Activated T-helper 1 cell treated with anti-CD3 and anti-CD28 coated beads, Interleukin-12 subunit alpha, Interleukin-12 subunit beta, Interleukin-2, Interleukin-4 antibody, amounts not matched to agents 30 ng/mL and 10 ng/mL and 1 ng/mL, durations not matched to agents 14 hours and 24 hours and 36 hours (primary cell): ENCODE measurements at regions of chr16 and their contacts with region 1.

Region 1: GRCh38 chr16:47460711-47461597 is at the starts of genes ITFG1 and PHKB:
- DNase-seq: peak; percentile 95
- H3K4me3 Mint-ChIP-seq: peak within 1 kb of the TSS; percentile 90
- H3K27ac Mint-ChIP-seq: peak within 1 kb of the TSS; percentile 97
- H3K4me1 Mint-ChIP-seq: peaks cover 51% of the 10 kb centered on the region
- H3K27me3 Mint-ChIP-seq: no peaks in the 10 kb centered on the region
- total RNA-seq, gene ITFG1: 25.4 and 27.6 TPM in 2 replicates
- total RNA-seq, gene PHKB: 24.4 and 26.6 TPM in 2 replicates

Region 2: GRCh38 chr16:46789499-46790414 is 671.2 kb before region 1 on chr16:
- intact Hi-C with region 1: loop called (anchors 10 kb)
- DNase-seq: peak; percentile 79
- H3K4me3 Mint-ChIP-seq: peak overlapping the region; percentile 61
- H3K27ac Mint-ChIP-seq: peak overlapping the region; percentile 59
- H3K4me1 Mint-ChIP-seq: peaks cover 22% of the 10 kb centered on the region
- H3K27me3 Mint-ChIP-seq: peaks cover 4% of the 10 kb centered on the region

Region 3: GRCh38 chr16:47037746-47038458 is 423.1 kb before region 1 on chr16:
- intact Hi-C with region 1: loop called (anchors 2 kb)
- DNase-seq: peak; percentile 85
- H3K4me3 Mint-ChIP-seq: peak overlapping the region; percentile 81
- H3K27ac Mint-ChIP-seq: no peak overlapping the region
- H3K4me1 Mint-ChIP-seq: peaks cover 4% of the 10 kb centered on the region
- H3K27me3 Mint-ChIP-seq: peaks cover 14% of the 10 kb centered on the region

Region 4: GRCh38 chr16:47387026-47387734 is 73.8 kb before region 1 on chr16:
- intact Hi-C with region 1: no loop called
- DNase-seq: no peak
- H3K4me3 Mint-ChIP-seq: no peak overlapping the region
- H3K27ac Mint-ChIP-seq: no peak overlapping the region
- H3K4me1 Mint-ChIP-seq: peaks cover 6% of the 10 kb centered on the region
- H3K27me3 Mint-ChIP-seq: no peaks in the 10 kb centered on the region

Region 5: GRCh38 chr16:47523342-47524006 is 62.5 kb after region 1 on chr16:
- intact Hi-C with region 1: no loop called
- DNase-seq: no peak
- H3K4me3 Mint-ChIP-seq: no peak overlapping the region
- H3K27ac Mint-ChIP-seq: no peak overlapping the region
- H3K4me1 Mint-ChIP-seq: peaks cover 13% of the 10 kb centered on the region
- H3K27me3 Mint-ChIP-seq: no peaks in the 10 kb centered on the region

Region 6: GRCh38 chr16:47732523-47733111 is 271.7 kb after region 1 on chr16:
- intact Hi-C with region 1: loop called (anchors 5 kb)
- DNase-seq: no peak
- H3K4me3 Mint-ChIP-seq: peak overlapping the region; percentile 47
- H3K27ac Mint-ChIP-seq: peak overlapping the region; percentile 87
- H3K4me1 Mint-ChIP-seq: peaks cover 21% of the 10 kb centered on the region
- H3K27me3 Mint-ChIP-seq: no peaks in the 10 kb centered on the region